SK-N-SH (cell line): ENCODE measurements at regions of chr2 and their contacts with region 1.

Region 1: GRCh38 chr2:27683390-27684071 is 19.8 kb downstream of the SLC4A1AP start:
- DNase-seq: peak; percentile 78
- H3K4me3 ChIP-seq: peak overlapping the region in 1 of 2 experiments; percentile 34; a peak in 1 of 4 replicates
- H3K27ac ChIP-seq: peak overlapping the region in 1 of 2 experiments; percentile 93; a peak in 2 of 4 replicates
- H3K4me1 ChIP-seq: peaks cover 0 to 19% of the 10 kb centered on the region in 2 experiments; a peak in 2 of 4 replicates
- H3K27me3 ChIP-seq: no peaks in the 10 kb centered on the region
- CTCF ChIP-seq: peak; percentile 100
- EP300 ChIP-seq: no peak
- RAD21 ChIP-seq: peak; percentile 83

Region 2: DNA sequence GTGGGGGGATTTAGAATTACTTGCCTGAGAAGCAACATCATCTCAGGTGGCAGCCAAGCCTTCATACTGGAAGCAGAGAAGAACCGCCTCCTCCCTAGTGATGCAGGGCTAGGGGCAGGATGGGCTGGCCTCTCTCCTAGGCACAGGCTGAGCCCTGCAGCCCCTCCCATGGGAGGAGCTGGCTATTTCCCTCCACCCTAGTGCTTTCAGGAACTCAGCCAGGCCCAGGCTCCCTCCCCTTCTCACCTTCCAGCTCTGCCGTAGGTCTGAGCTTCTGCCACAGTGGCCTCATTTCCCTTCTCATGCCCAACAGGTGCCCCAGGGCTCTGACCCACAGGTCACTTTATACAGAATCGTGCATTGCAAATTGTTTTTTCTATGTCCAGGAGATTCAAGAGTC is 866.6 kb before region 1 on chr2:
- CTCF ChIA-PET with region 1: no interaction called
- POLR2A ChIA-PET with region 1: no interaction called
- DNase-seq: peak; percentile 51
- H3K4me3 ChIP-seq: no peak overlapping the region
- H3K27ac ChIP-seq: no peak overlapping the region
- H3K4me1 ChIP-seq: no peaks in the 10 kb centered on the region; a peak in 1 of 4 replicates
- H3K27me3 ChIP-seq: no peaks in the 10 kb centered on the region
- CTCF ChIP-seq: no peak
- EP300 ChIP-seq: no peak
- RAD21 ChIP-seq: no peak

Region 3: DNA sequence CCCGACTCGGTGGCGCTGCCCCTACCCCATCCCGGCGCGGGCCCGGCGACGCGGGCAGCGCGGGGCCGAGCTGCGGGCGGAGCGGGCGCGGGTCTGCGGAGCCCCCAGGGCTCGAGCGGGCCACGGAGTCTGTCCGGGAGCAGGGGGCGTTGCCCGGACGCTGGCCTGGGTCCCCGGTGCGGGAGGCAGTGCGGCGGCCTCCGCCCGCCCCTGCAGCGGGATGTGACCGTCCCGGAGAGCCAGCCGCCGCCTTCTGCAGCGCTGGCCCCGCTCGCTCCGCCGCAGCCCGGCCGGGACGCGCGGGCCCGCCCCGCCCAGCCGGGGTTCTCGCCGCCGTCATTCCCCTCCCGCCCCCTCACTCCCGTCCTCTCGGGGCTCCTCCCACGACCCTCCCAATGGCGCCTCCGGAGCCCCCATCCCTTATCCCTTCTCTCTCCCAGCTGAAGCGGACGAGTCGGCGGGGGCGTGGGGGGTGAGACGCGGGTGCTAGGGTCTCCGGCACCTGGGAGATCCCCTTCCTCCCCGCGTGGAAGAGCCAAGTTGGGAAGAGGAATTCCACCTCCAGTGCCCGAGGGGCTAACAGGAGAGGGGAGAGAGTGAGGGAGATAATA is 188.5 kb before region 1 on chr2 and contains the start of gene FNDC4:
- CTCF ChIA-PET with region 1: interaction called, 13 read pairs
- POLR2A ChIA-PET with region 1: no interaction called
- DNase-seq: peak; percentile 94
- H3K4me3 ChIP-seq: peak within 1 kb of the TSS; percentile 81 to 85
- H3K27ac ChIP-seq: peak within 1 kb of the TSS in 1 of 2 experiments; percentile 53; a peak in 1 of 4 replicates
- H3K4me1 ChIP-seq: peaks cover 7 to 10% of the 10 kb centered on the region in 2 experiments
- H3K27me3 ChIP-seq: no peaks in the 10 kb centered on the region
- CTCF ChIP-seq: no peak
- EP300 ChIP-seq: no peak
- RAD21 ChIP-seq: no peak
- polyA plus RNA-seq, gene FNDC4: 26.5 and 27.0 TPM in 2 replicates

Region 4: DNA sequence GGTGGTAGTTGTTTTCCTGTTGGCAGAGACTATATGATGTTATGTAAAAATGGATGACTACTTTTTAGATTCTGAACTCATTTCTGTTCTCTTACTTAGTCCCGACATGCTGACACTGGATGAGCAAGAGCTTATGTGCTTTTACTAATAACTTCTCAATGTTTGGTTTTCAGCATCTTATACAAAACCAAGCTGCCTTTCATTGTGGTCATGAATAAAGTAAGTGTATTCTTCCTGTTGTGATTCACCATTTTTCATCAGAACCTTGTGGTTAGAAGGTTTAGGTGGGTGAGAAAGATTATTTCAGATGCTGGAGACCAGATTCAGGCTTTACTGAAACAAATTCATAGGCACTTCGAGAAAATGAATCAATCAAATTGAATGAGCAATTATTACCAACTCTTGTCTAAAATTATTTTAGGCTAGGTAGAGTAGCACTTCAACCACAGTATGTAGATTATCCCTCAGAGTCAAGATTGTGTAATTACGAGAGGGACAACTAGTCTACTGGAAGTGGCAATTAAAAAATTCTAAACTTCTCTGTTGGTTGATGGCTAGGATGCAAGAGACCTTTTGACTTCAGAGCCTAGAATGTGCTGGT is 45.4 kb before region 1 on chr2:
- CTCF ChIA-PET with region 1: interaction called, 20 read pairs
- POLR2A ChIA-PET with region 1: no interaction called
- DNase-seq: no peak
- H3K4me3 ChIP-seq: no peak overlapping the region
- H3K27ac ChIP-seq: peak overlapping the region in 1 of 2 experiments; percentile 56; a peak in 2 of 4 replicates
- H3K4me1 ChIP-seq: no peaks in the 10 kb centered on the region; a peak in 1 of 4 replicates
- H3K27me3 ChIP-seq: no peaks in the 10 kb centered on the region
- CTCF ChIP-seq: no peak
- EP300 ChIP-seq: 0 out of 4 replicates have a peak, but pooled peaks of 1 of the 2 experiments have one; percentile 25
- RAD21 ChIP-seq: no peak

Region 5: DNA sequence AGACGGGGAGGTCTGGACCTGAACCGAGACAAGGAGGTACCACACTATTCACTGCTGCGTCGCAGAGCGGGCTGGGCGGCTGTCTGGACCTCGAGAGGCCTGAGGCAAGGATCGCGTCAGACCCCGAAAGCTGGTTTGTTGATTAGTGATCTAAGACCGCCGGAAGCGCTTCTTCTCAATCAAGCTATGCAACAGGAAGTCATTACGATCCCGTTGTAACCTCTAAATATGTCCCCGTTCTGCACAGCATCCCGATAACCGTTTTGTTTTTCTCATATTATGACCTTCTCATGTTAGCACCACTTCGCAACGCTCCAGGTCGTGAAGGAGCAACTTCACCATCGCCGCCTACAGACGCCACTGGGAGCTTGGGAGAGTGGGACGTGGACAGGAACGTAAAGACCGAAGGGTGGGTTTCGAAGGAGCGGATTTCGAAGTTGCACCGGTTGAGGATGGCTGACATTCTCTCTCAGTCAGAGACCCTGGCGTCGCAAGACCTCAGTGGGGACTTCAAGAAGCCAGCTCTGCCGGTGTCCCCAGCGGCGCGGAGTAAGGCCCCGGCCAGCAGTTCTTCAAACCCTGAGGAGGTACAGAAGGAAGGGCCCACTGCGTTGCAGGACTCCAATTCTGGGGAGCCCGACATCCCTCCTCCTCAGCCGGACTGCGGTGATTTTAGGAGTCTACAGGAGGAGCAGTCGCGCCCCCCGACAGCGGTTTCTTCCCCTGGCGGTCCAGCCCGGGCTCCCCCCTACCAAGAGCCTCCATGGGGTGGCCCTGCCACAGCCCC is 19.9 kb before region 1 on chr2 and contains the starts of genes SLC4A1AP and SUPT7L:
- CTCF ChIA-PET with region 1: interaction called, 146 read pairs
- POLR2A ChIA-PET with region 1: interaction called, 3 read pairs
- DNase-seq: peak; percentile 85
- H3K4me3 ChIP-seq: peak within 1 kb of the TSS; percentile 91 to 99
- H3K27ac ChIP-seq: peak within 1 kb of the TSS; percentile 92 to 100
- H3K4me1 ChIP-seq: peaks cover 16 to 24% of the 10 kb centered on the region in 2 experiments; a peak in 3 of 4 replicates
- H3K27me3 ChIP-seq: no peaks in the 10 kb centered on the region
- CTCF ChIP-seq: no peak
- EP300 ChIP-seq: no peak
- RAD21 ChIP-seq: no peak
- polyA plus RNA-seq, gene SLC4A1AP: 9.4 and 9.8 TPM in 2 replicates
- polyA plus RNA-seq, gene SUPT7L: 49.7 and 69.3 TPM in 2 replicates

Region 6: GRCh38 chr2:27715318-27716210 is 32.0 kb after region 1 on chr2:
- CTCF ChIA-PET with region 1: interaction called, 15 read pairs
- POLR2A ChIA-PET with region 1: no interaction called
- DNase-seq: peak; percentile 93
- H3K4me3 ChIP-seq: peak overlapping the region; percentile 51 to 58
- H3K27ac ChIP-seq: peak overlapping the region; percentile 3 to 60; a peak in 3 of 4 replicates
- H3K4me1 ChIP-seq: peaks cover 9 to 11% of the 10 kb centered on the region in 2 experiments; a peak in 3 of 4 replicates
- H3K27me3 ChIP-seq: no peaks in the 10 kb centered on the region
- CTCF ChIP-seq: no peak
- EP300 ChIP-seq: 0 out of 4 replicates have a peak, but pooled peaks of 1 of the 2 experiments have one; percentile 17
- RAD21 ChIP-seq: no peak

Region 7: DNA sequence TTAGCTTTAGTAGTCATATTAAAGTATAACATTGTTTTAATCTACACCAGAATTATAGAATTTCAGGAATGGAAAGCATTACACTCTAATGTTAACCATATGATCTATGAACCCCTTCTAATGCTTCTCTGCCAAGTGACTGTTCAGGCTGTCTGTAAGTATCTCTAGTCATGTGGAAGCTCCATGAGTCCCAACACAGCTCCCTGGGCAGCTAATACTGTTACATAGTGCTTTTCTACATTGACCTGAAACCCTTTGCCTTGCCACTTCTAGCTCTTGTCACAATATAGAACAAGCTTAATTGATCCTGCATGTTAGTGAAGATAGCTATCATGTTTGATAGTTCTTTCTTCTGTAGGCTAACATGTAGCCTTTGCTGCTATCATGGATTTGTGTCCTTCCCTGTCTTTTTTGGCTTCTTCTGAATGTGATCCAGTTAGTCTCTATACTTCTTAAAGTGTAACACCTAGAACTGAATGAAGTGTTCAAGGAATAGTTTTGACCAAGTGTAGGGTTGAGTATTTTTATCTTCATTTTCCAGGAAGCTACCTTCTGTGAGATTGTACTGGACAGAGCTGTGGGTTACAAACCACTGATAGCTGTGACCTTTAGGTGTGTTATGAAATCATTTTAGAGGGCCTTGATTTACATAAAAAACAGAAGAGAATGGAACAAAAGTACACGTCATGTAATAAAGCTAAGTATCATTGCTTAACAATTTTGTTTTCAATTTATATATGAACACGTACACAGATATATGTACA is 230.7 kb after region 1 on chr2:
- CTCF ChIA-PET with region 1: no interaction called
- POLR2A ChIA-PET with region 1: no interaction called
- DNase-seq: no peak
- H3K4me3 ChIP-seq: no peak overlapping the region
- H3K27ac ChIP-seq: peak overlapping the region in 1 of 2 experiments; percentile 36; a peak in 2 of 4 replicates
- H3K4me1 ChIP-seq: peaks cover 4 to 13% of the 10 kb centered on the region in 2 experiments; a peak in 3 of 4 replicates
- H3K27me3 ChIP-seq: no peaks in the 10 kb centered on the region
- CTCF ChIP-seq: no peak
- EP300 ChIP-seq: no peak
- RAD21 ChIP-seq: no peak

Region 8: GRCh38 chr2:28392297-28393113 is 709.0 kb after region 1 on chr2 and contains the start of gene FOSL2:
- CTCF ChIA-PET with region 1: interaction called, 16 read pairs
- POLR2A ChIA-PET with region 1: no interaction called
- DNase-seq: peak; percentile 98
- H3K4me3 ChIP-seq: peak within 1 kb of the TSS; percentile 83 to 84
- H3K27ac ChIP-seq: peak within 1 kb of the TSS; percentile 86 to 97
- H3K4me1 ChIP-seq: peaks cover 23 to 24% of the 10 kb centered on the region in 2 experiments
- H3K27me3 ChIP-seq: no peaks in the 10 kb centered on the region
- CTCF ChIP-seq: no peak
- EP300 ChIP-seq: 0 out of 4 replicates have a peak, but pooled peaks have one; percentile 8 to 24
- RAD21 ChIP-seq: peak; percentile 34
- polyA plus RNA-seq, gene FOSL2: 30.1 and 41.7 TPM in 2 replicates